ENCODE measurements at regions of chr22 and their contacts with region 1.

Region 1: GRCh38 chr22:36252754-36253517 is at the start of gene APOL1:
- DNase-seq: peak; percentile 61 to 87 (median 78)
- H3K4me3 ChIP-seq: peak within 1 kb of the TSS; percentile 51 to 97 (median 81)
- H3K27ac ChIP-seq: peak within 1 kb of the TSS; percentile 62 to 86
- H3K4me1 ChIP-seq: peaks cover 0 to 27% (median 25%) of the 10 kb centered on the region in 4 experiments
- H3K27me3 ChIP-seq: no peaks in the 10 kb centered on the region

Region 2: DNA sequence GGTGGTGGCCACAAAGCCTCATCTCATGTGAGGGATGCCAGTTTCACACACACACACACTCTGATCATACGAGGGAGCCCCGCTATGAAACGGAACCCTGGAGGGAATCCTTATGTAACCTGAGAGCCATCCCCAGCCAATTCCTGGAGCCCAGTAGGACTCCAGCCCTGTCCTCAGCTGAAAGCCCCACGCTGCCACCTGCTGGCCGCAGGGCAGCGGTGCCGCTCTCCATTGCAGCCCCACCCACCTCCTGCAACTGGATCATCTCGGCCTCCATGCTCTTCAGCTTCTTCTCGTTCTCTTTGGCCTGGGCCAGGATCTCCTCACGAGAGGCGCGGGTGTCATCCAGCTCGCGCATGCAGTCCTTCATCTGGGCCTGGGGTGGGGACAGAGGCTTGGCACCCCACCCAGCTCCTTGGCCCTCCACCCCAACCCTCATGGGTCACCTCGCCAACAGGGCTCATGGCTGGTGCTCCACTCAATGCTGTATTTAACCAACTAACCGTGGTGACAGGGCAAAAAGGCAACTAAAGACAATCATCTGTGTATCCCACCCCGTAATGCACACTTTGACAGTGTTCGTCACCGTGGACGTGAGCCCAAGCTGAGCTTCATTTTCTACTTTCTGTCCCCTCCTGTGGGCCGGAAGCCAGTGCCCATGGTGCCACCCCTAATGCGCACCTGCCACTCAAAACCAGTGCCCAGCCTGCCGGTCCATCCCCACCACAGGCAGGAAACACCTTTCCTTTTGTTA is 33.7 kb after region 1 on chr22:
- CTCF ChIA-PET with region 1: interaction called, 11 read pairs
- POLR2A ChIA-PET with region 1: no interaction called
- DNase-seq: peak; percentile 50 to 79 (median 69)
- H3K4me3 ChIP-seq: no peak overlapping the region
- H3K27ac ChIP-seq: no peak overlapping the region
- H3K4me1 ChIP-seq: peaks cover 0 to 3% (median under 1%) of the 10 kb centered on the region in 4 experiments
- H3K27me3 ChIP-seq: no peaks in the 10 kb centered on the region